Motor neuron (in vitro differentiated cells): ENCODE measurements at regions of chr16 and their contacts with region 1.

Region 1: DNA sequence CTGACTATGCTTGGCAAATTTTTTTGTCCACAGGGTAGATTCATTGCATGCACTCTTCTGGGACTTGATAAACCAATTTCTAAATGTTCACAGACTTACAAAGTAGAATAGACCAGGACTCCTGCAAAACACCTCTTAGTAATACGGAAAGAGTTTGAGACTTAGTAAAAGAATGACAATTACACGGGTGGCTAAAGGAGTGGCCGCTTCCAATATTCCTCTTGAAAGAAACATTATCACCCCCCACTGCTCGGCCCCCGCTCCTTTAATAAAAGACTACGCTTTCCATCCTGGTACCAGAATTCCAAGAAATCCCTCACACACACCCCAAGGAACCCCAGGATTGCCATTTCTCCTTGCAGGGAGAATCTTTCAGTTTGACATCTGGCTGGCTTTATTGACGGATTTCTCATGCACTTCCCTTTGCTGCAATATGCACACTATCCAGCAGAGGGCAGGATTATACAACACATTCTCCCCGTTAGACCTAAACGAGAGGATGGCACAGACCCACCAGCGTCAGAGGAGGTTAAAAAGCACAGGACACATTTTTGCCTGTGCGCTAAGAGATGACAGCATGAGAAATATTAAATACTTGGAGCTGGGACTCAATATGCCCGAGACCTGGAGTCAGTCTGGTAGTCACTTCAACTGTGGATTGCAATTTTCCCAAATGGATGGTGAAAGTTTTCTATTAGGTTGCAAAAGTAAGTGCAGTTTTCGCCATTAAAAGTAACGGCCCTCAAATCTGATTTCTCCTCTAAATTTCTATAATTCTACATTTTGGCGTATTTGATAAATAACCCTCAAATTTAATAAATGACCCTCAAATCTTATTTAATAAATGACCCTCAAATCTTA is 46.6 kb upstream of the NUDT7 start:
- ATAC-seq: peak; percentile 80 to 91 (median 86)
- H3K4me3 ChIP-seq: no peak overlapping the region
- H3K27ac ChIP-seq: no peak overlapping the region
- H3K4me1 ChIP-seq: peaks cover 2 to 6% of the 10 kb centered on the region in 2 donors

Region 2: DNA sequence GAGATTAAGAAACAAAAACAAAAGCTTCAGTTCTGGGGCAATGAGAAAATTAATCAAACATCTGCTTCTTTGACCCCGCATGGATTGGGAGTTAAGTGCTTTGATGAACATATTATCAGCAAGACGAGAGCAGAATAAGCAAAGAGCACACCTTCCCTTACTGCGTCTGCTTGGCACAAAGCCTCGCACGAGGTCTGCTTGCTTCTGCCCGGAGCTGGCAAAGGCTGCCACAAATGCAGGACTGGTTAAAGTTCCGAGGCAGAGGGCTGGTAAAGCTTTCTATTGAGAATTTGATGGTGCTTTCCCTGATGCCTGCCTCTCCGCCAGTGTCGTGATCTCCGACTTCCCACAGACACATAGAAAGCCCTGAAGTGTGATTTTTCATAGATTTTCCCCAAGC is 129.7 kb after region 1 on chr16:
- in situ Hi-C with region 1: no loop called
- ATAC-seq: no peak
- H3K4me3 ChIP-seq: no peak overlapping the region
- H3K27ac ChIP-seq: no peak overlapping the region
- H3K4me1 ChIP-seq: peaks cover 0 to 11% of the 10 kb centered on the region in 2 donors

Region 3: GRCh38 chr16:77963185-77964044 is 287.7 kb after region 1 on chr16:
- in situ Hi-C with region 1: loop called in 4 of 9 experiments (anchors 10 to 25 kb)
- ATAC-seq: peak in 4 of 8 experiments; percentile 18 to 58 (median 40)
- H3K4me3 ChIP-seq: no peak overlapping the region
- H3K27ac ChIP-seq: no peak overlapping the region
- H3K4me1 ChIP-seq: peaks cover 5 to 19% of the 10 kb centered on the region in 2 donors

Region 4: DNA sequence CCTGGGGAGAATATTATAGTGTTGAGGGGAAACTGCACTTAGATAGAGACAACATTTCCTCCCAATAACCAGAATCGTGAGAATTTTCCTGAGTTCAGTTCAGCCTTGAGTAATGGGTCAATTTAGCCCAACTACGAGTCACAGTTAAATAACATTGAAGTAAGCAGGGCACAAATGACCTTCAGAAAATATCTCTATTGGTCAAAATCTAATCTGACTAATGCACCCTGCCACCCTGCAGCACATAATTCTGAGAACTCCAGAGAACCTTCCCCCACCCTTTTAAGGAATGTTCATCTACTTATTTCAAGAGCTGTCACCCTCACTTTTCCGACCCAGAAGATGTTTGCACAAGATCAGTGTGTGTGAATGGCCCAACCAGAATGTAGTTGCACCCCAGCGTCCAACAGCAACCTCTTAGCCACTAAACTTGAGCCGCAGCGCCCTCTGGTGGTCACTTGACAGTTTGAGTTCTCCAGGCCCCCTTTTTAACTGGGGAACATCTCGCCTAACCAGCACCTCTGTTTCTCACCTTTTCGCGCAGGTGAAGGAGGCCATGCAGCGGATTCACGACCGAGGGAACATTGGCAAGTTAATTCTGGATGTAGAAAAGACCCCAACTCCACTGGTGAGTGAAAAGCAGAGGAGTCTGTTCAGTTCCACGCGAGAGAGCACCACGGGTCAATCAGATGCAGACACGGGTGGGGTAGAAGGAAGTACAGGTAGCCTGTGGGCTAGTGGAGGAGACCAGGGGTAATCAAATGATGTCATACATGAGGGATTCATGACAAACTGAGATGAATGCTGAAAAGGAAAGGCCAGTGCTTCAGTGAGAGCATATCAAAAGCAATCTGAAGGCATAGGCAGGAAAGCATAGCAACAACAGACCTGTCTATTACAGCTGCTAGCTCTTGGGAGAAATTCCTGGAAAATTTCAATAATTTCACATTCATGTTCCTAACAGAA is 295.9 kb after region 1 on chr16:
- in situ Hi-C with region 1: loop called (anchors 10 to 25 kb)
- ATAC-seq: peak; percentile 75 to 97 (median 86)
- H3K4me3 ChIP-seq: no peak overlapping the region
- H3K27ac ChIP-seq: no peak overlapping the region
- H3K4me1 ChIP-seq: peaks cover 4 to 6% of the 10 kb centered on the region in 2 donors

Region 5: DNA sequence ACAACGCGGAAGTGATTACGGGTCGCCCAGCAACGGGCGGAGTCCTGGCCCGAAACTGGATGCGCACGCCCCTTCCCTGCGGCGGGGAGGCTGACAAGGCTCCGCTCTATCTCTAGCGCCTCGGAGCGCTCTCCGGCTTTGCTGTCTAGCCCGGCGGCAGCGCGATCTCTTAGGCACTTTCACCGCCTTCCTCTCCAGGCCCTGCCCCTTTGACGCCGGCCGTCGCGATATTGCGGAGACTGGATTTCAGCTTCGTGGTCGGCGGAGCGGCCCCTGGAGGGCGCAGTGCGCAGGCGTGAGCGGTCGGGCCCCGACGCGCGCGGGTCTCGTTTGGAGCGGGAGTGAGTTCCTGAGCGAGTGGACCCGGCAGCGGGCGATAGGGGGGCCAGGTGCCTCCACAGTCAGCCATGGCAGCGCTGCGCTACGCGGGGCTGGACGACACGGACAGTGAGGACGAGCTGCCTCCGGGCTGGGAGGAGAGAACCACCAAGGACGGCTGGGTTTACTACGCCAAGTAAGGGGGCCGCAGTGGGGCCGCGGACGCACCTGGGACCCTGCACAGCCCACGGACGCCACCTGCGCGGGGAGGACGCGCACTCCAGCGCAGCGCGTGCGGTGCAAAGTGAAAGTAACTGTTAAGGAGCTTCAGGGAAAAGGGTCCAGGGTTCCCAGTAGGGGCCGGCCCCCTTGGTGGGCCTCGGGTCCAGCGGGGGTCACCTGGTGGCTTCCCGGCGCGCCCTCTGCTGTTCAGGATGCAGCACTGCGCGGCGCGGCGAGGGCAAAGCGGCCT is 423.9 kb after region 1 on chr16 and contains the start of gene WWOX:
- in situ Hi-C with region 1: loop called in 4 of 9 experiments (anchors 10 to 25 kb)
- ATAC-seq: peak; percentile 95 to 96 (median 96)
- H3K4me3 ChIP-seq: peak within 1 kb of the TSS; percentile 54 to 78 (median 67)
- H3K27ac ChIP-seq: peak within 1 kb of the TSS; percentile 10 to 18
- H3K4me1 ChIP-seq: no peaks in the 10 kb centered on the region
- total RNA-seq, gene WWOX: 10.3 to 27.8 (median 12.3) TPM

Region 6: GRCh38 chr16:78800523-78800922 is 1124.8 kb after region 1 on chr16:
- in situ Hi-C with region 1: no loop called
- ATAC-seq: no peak
- H3K4me3 ChIP-seq: no peak overlapping the region
- H3K27ac ChIP-seq: no peak overlapping the region
- H3K4me1 ChIP-seq: peaks cover 8 to 29% of the 10 kb centered on the region in 2 donors